ENCODE measurements at regions of chr2 and their contacts with region 1.

Region 1: DNA sequence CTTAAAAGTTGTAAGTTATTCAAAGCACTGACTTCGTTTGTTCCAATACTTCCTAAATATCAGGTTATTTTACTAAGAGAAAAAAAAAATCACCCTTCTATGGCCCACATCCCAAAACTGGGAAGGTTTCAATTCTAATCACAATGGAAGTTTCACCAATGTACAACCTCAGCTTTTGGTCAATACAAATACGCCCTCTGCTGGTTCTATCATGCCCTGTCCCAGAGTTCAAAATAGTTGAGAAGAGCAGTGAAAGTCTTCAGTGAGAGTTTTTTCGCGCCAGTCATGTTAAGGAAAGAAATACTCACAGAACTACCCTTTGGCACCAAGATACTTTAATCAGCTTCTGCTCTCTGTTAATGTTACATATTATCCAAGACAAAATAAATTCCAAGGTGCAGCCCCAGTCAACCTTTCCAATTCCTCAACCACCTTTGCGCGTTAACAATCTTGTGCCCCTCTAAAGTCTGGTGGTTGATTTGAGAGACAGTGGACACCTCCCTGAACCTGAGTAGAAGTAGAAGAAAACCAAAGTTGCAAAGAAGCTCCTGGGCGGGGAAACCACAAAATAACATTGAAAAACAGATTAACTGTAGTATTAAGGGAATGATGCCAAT is 59.9 kb downstream of the SUMO1 start:
- DNase-seq: peak; percentile 67
- H3K4me3 ChIP-seq: no peak overlapping the region
- H3K27ac ChIP-seq: no peak overlapping the region
- H3K4me1 ChIP-seq: no peaks in the 10 kb centered on the region
- CTCF ChIP-seq: peak; percentile 97

Region 2: DNA sequence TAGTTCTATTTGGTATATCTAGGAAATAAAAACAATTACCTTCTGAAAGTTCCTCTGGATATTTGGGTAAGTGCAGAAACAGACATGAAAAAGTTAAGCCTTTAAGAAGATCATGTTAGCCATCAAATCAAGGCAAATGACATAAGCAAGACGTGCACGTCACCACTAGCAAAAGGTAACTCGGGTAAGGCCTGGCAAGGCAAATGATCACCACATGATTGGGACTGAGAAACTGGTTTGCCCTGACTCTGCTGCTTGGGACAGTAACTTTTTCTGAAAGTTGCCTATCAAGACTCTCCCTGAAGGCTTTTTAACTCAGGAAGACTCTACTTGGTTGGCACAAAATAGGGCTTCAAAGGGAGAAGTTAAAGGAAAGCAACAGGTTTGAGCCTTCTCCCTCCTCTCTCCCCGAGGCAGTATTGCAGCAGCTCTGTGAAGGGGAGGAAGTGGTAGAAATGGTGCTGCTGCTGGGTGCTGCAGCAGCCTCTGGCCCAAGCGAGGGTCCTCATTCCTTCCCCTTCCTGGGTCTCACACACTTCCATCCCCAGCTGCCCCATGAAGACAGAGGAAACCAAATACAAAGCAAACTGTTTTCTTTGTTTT is 518.1 kb before region 1 on chr2:
- CTCF ChIA-PET with region 1: no interaction called
- POLR2A ChIA-PET with region 1: no interaction called
- intact Hi-C with region 1: loop called (anchors 10 kb)
- DNase-seq: peak; percentile 8
- H3K4me3 ChIP-seq: no peak overlapping the region
- H3K27ac ChIP-seq: no peak overlapping the region
- H3K4me1 ChIP-seq: no peaks in the 10 kb centered on the region
- CTCF ChIP-seq: no peak

Region 3: GRCh38 chr2:201795607-201796477 is 382.6 kb before region 1 on chr2:
- CTCF ChIA-PET with region 1: no interaction called
- POLR2A ChIA-PET with region 1: no interaction called
- intact Hi-C with region 1: loop called (anchors 2 kb)
- DNase-seq: peak; percentile 19
- H3K4me3 ChIP-seq: no peak overlapping the region
- H3K27ac ChIP-seq: no peak overlapping the region
- H3K4me1 ChIP-seq: peaks cover 7% of the 10 kb centered on the region
- CTCF ChIP-seq: peak; percentile 75

Region 4: GRCh38 chr2:201860636-201861066 is 317.8 kb before region 1 on chr2:
- CTCF ChIA-PET with region 1: no interaction called
- POLR2A ChIA-PET with region 1: no interaction called
- intact Hi-C with region 1: loop called (anchors 1 kb)
- DNase-seq: peak; percentile 64
- H3K4me3 ChIP-seq: no peak overlapping the region
- H3K27ac ChIP-seq: no peak overlapping the region
- H3K4me1 ChIP-seq: no peaks in the 10 kb centered on the region
- CTCF ChIP-seq: peak; percentile 87

Region 5: GRCh38 chr2:201964631-201965206 is 213.7 kb before region 1 on chr2:
- CTCF ChIA-PET with region 1: no interaction called
- POLR2A ChIA-PET with region 1: no interaction called
- intact Hi-C with region 1: loop called (anchors 10 kb)
- DNase-seq: no peak
- H3K4me3 ChIP-seq: no peak overlapping the region
- H3K27ac ChIP-seq: no peak overlapping the region
- H3K4me1 ChIP-seq: no peaks in the 10 kb centered on the region
- CTCF ChIP-seq: no peak

Region 6: DNA sequence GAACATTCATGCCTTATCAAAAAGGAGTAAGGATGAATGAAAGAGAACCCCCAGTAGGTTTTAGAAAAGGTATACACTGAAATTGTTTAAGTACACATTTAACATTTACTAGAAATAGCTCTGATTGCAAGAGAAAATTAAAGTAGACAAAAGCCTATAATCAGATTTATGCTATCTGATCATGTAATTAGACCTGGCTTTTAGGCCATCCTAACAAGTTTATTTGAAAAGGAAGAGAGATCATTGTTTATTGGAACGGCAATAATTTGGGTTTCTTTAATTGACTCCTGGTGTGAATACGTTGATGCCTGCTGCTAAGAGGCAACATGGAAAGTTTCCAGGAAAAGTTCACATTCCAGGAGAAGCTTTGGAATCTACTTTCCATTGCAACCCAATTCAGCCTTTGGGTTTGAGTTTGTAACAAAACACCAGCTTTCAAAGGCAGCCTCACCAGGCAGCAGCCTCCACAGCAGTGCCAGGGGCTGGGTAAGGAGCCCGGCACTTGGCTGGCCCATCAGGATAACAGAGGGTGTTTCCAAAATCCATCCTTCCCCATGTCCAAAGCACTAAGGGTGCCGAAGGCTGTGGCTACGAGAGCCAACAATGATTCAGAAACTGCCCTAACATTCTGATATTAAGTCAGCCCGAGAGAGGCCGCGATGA is 126.8 kb before region 1 on chr2:
- CTCF ChIA-PET with region 1: no interaction called
- POLR2A ChIA-PET with region 1: no interaction called
- intact Hi-C with region 1: no loop called
- DNase-seq: no peak
- H3K4me3 ChIP-seq: no peak overlapping the region
- H3K27ac ChIP-seq: no peak overlapping the region
- H3K4me1 ChIP-seq: no peaks in the 10 kb centered on the region
- CTCF ChIP-seq: no peak

Region 7: GRCh38 chr2:202104278-202104870 is 74.1 kb before region 1 on chr2:
- CTCF ChIA-PET with region 1: no interaction called
- POLR2A ChIA-PET with region 1: no interaction called
- intact Hi-C with region 1: loop called (anchors 5 kb)
- DNase-seq: peak; percentile 39
- H3K4me3 ChIP-seq: no peak overlapping the region
- H3K27ac ChIP-seq: no peak overlapping the region
- H3K4me1 ChIP-seq: peaks cover 9% of the 10 kb centered on the region
- CTCF ChIP-seq: peak; percentile 83

Region 8: GRCh38 chr2:202135091-202135874 is 43.2 kb before region 1 on chr2:
- CTCF ChIA-PET with region 1: no interaction called
- POLR2A ChIA-PET with region 1: no interaction called
- intact Hi-C with region 1: no loop called
- DNase-seq: no peak
- H3K4me3 ChIP-seq: no peak overlapping the region
- H3K27ac ChIP-seq: no peak overlapping the region
- H3K4me1 ChIP-seq: no peaks in the 10 kb centered on the region
- CTCF ChIP-seq: no peak

Region 9: GRCh38 chr2:202932425-202933138 is 754.1 kb after region 1 on chr2:
- CTCF ChIA-PET with region 1: no interaction called
- POLR2A ChIA-PET with region 1: no interaction called
- intact Hi-C with region 1: no loop called
- DNase-seq: no peak
- H3K4me3 ChIP-seq: no peak overlapping the region
- H3K27ac ChIP-seq: no peak overlapping the region
- H3K4me1 ChIP-seq: no peaks in the 10 kb centered on the region
- CTCF ChIP-seq: no peak